Activated CD8-positive, alpha-beta T cell treated with anti-CD3 and anti-CD28 coated beads for 36 hours (primary cell): ENCODE measurements at regions of chr19 and their contacts with region 1.

Region 1: GRCh38 chr19:35716801-35717666 is 769 bp upstream of the KMT2B start:
- DNase-seq: peak; percentile 97
- ATAC-seq: peak; percentile 62
- H3K4me3 Mint-ChIP-seq: peak overlapping the region; percentile 83
- H3K27ac Mint-ChIP-seq: peak overlapping the region; percentile 100
- H3K4me1 Mint-ChIP-seq: peaks cover 30% of the 10 kb centered on the region
- H3K27me3 Mint-ChIP-seq: no peaks in the 10 kb centered on the region
- CTCF ChIP-seq: peak; percentile 91

Region 2: GRCh38 chr19:35628565-35629331 is 88.3 kb before region 1 on chr19 and contains the start of gene RBM42:
- CTCF ChIA-PET with region 1: no interaction called
- POLR2A ChIA-PET with region 1: no interaction called
- intact Hi-C with region 1: no loop called
- DNase-seq: peak; percentile 98
- ATAC-seq: peak; percentile 100
- H3K4me3 Mint-ChIP-seq: peak within 1 kb of the TSS; percentile 88
- H3K27ac Mint-ChIP-seq: peak within 1 kb of the TSS; percentile 89
- H3K4me1 Mint-ChIP-seq: peaks cover 16% of the 10 kb centered on the region
- H3K27me3 Mint-ChIP-seq: no peaks in the 10 kb centered on the region
- CTCF ChIP-seq: no peak
- total RNA-seq, gene RBM42: 82.9 to 95.2 TPM

Region 3: GRCh38 chr19:35702223-35703012 is 14.6 kb before region 1 on chr19:
- CTCF ChIA-PET with region 1: interaction called, 137 read pairs
- POLR2A ChIA-PET with region 1: interaction called, 215 read pairs
- intact Hi-C with region 1: loop called (anchors 2 kb)
- DNase-seq: peak; percentile 99
- ATAC-seq: peak; percentile 98
- H3K4me3 Mint-ChIP-seq: peak overlapping the region; percentile 98
- H3K27ac Mint-ChIP-seq: peak overlapping the region; percentile 98
- H3K4me1 Mint-ChIP-seq: peaks cover 13% of the 10 kb centered on the region
- H3K27me3 Mint-ChIP-seq: no peaks in the 10 kb centered on the region
- CTCF ChIP-seq: no peak

Region 4: DNA sequence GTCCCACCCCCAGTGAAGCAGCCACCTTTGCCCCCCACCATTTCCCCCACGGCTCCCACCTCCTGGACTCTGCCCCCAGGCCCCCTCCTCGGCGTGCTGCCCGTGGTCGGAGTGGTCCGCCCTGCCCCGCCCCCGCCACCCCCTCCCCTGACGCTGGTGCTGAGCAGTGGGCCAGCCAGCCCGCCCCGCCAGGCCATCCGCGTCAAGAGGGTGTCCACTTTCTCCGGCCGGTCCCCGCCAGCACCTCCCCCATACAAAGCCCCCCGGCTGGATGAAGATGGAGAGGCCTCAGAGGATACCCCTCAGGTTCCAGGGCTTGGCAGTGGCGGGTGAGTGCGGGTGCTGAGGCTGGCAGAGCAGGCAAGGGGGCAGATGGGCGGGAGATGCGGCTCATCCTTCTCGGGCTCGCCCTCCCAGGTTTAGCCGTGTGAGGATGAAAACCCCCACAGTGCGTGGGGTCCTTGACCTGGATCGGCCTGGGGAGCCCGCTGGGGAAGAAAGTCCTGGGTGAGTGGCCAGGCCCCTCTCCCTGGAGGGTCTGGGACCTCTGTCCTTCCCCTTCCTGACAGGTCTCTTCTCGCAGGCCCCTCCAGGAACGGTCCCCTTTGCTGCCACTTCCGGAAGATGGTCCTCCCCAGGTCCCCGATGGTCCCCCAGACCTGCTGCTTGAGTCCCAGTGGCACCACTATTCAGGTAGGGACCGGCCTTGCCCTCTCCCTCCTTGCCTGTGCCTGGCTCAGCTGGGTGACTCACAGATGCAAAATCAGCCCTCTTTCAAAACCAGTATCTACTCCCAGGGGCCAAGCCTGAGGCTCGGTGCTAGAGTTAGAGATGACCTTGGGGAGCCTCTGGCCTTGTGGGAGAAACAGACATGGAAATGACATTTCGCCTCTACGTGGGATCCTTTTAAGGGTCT is 16.4 kb after region 1 on chr19:
- CTCF ChIA-PET with region 1: no interaction called
- POLR2A ChIA-PET with region 1: interaction called, 105 read pairs
- intact Hi-C with region 1: no loop called
- DNase-seq: no peak
- ATAC-seq: no peak
- H3K4me3 Mint-ChIP-seq: no peak overlapping the region
- H3K27ac Mint-ChIP-seq: peak overlapping the region; percentile 64
- H3K4me1 Mint-ChIP-seq: peaks cover 6% of the 10 kb centered on the region
- H3K27me3 Mint-ChIP-seq: no peaks in the 10 kb centered on the region
- CTCF ChIP-seq: no peak

Region 5: DNA sequence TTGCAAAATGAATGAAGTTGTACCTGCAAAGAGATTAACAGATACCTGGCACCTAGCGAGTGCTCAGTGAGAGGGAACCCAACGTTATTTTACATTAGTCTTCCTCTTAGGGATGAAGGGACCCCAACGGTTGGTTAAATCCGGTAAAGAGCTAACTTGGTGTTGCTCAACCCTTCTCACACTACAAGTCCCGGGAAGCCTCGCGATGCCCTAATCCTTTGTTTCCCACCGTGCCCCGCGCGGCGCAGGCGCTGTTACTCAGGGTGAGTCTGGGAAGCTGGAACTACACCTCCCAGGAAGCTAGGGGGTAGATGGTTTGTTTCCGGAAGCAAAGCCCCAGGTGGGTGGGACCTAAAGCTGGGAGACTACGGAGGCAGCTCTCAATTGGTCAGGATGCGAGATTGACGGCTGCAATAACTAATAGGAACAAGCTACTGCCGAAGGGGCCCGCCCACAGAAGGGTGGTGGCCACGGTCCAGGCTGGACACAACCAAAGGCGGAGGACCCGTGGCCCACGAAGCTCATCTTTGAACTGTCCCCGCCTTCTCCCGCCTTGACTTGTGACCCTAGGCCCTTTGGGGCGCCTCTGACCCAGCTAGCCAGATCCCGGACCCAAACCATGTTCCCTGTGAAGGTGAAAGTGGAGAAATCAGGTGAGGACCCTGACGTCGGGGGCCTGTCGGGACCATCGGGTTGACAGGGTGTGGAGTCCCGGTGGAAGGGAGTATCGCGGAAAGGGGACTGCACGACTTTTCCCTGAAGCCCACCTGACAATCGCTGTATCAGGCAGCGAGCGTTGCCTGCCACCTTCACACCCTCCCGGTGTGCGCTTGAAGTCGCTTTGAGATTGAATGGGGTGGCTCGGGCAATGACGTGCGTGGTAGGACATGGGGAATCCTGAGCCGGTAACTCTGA is 31.3 kb after region 1 on chr19 and contains the start of gene LIN37:
- CTCF ChIA-PET with region 1: interaction called, 18 read pairs
- POLR2A ChIA-PET with region 1: interaction called, 99 read pairs
- intact Hi-C with region 1: loop called (anchors 5 kb)
- DNase-seq: peak; percentile 100
- ATAC-seq: peak; percentile 81
- H3K4me3 Mint-ChIP-seq: peak within 1 kb of the TSS; percentile 99
- H3K27ac Mint-ChIP-seq: peak within 1 kb of the TSS; percentile 96
- H3K4me1 Mint-ChIP-seq: peaks cover 36% of the 10 kb centered on the region
- H3K27me3 Mint-ChIP-seq: no peaks in the 10 kb centered on the region
- CTCF ChIP-seq: no peak
- total RNA-seq, gene LIN37: 4.5 to 7.8 TPM

Region 6: GRCh38 chr19:35790981-35791813 is 74.2 kb after region 1 on chr19:
- CTCF ChIA-PET with region 1: no interaction called
- POLR2A ChIA-PET with region 1: no interaction called
- intact Hi-C with region 1: no loop called
- DNase-seq: peak; percentile 39
- ATAC-seq: peak; percentile 72
- H3K4me3 Mint-ChIP-seq: no peak overlapping the region
- H3K27ac Mint-ChIP-seq: no peak overlapping the region
- H3K4me1 Mint-ChIP-seq: no peaks in the 10 kb centered on the region
- H3K27me3 Mint-ChIP-seq: peaks cover 8% of the 10 kb centered on the region
- CTCF ChIP-seq: no peak